ENCODE measurements at regions of chr14 and their contacts with region 1.

Region 1: DNA sequence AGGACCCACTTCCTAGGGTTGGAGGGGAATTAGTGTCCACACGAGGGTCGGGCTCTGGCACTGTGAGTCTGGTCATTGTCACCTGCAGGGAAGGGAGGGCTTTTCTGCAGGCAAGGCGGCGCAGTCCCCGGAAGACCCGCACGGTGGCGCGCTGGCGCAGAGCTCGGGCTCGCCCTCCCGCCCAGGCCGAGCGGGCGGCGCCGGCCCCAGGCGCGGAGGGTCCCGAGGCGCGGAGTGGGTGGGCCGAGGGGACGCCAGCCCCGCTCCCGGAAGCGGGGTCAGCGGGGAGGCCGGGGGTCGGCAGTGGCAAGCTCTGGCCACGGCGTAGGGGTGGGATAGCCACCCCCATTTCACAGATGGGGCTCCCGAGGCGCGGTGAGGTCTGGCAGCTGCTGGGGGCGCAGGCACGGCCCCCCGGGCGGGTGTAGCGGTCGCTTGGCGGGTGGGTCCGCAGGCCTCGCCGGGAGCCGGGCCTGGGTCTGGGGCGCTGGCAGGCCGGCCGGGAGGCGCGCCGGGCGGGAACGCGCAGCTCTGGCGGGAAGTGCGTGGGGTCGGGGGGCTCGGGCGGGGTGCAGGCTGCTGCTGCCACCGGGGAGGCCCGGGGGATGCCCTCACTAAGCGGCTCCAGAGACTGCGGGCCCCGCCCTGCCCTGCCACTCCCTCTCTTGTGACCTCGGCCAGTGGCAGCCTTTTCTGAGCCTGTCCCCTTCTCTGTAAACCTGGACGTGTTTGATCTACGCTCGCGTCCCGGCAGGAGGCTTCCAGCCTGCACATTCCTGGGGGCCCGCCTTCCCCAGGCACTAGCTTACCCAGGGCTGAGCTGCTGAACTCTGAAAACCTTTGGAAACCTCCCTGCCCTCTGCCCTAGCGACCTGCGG is 46.1 kb downstream of the CYP46A1 start:
- DNase-seq: peak; percentile 56
- H3K4me3 Mint-ChIP-seq: no peak overlapping the region
- H3K27ac Mint-ChIP-seq: no peak overlapping the region
- H3K4me1 Mint-ChIP-seq: no peaks in the 10 kb centered on the region
- H3K27me3 Mint-ChIP-seq: peaks cover 8% of the 10 kb centered on the region

Region 2: GRCh38 chr14:99654235-99654966 is 75.8 kb before region 1 on chr14:
- intact Hi-C with region 1: no loop called
- DNase-seq: no peak
- H3K4me3 Mint-ChIP-seq: no peak overlapping the region
- H3K27ac Mint-ChIP-seq: no peak overlapping the region
- H3K4me1 Mint-ChIP-seq: no peaks in the 10 kb centered on the region
- H3K27me3 Mint-ChIP-seq: peaks cover 23% of the 10 kb centered on the region

Region 3: GRCh38 chr14:99793213-99794150 is 63.3 kb after region 1 on chr14 and contains the start of gene EML1:
- intact Hi-C with region 1: loop called (anchors 5 kb)
- DNase-seq: peak; percentile 69
- H3K4me3 Mint-ChIP-seq: peak within 1 kb of the TSS; percentile 69
- H3K27ac Mint-ChIP-seq: peak within 1 kb of the TSS; percentile 77
- H3K4me1 Mint-ChIP-seq: peaks cover 20% of the 10 kb centered on the region
- H3K27me3 Mint-ChIP-seq: peaks cover 64% of the 10 kb centered on the region
- total RNA-seq, gene EML1: 0.76 and 0.91 TPM in 2 replicates

Region 4: GRCh38 chr14:99884834-99885648 is 154.8 kb after region 1 on chr14:
- intact Hi-C with region 1: loop called (anchors 1 kb)
- DNase-seq: no peak
- H3K4me3 Mint-ChIP-seq: no peak overlapping the region
- H3K27ac Mint-ChIP-seq: no peak overlapping the region
- H3K4me1 Mint-ChIP-seq: no peaks in the 10 kb centered on the region
- H3K27me3 Mint-ChIP-seq: peaks cover 8% of the 10 kb centered on the region

Measured in activated T-helper 1 cell treated with anti-CD3 and anti-CD28 coated beads, Interleukin-12 subunit alpha, Interleukin-12 subunit beta, Interleukin-2, Interleukin-4 antibody, amounts not matched to agents 30 ng/mL and 10 ng/mL and 1 ng/mL, durations not matched to agents 14 hours and 24 hours and 36 hours (primary cell).